ENCODE measurements at regions of chr1 and their contacts with region 1.

Region 1: DNA sequence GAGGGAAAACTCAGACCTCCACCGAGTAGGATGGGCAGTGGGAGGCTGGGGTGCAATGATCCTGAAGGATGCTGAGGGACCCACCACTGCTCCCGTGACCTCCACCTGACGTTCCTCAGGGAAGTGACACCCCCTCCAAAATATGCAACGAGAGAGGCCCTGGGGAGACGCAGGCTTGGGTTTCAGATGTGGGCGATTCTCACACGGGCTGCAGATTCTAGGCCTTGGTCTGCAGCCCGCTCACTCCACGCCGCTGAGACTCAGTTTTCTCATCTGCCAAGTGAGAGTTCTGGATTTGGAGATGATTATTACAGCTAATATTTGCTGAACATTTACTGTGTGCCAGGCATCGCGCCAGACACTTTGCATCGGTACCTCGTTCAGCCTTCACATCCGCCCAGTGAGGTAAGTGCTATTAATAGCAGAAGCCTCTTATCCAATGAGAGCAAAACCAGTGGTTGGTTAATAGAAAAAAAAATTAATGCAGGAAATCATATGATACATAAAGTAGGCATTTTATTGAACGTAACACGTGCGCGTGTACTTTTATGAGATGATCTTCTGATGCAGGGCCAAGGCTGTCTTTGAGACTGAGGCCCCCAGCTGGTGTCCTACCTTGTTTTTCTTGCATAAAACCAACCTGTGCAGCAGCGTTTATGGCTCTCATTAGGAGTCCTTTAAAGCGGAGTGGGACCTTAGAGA is 102.0 kb upstream of the RUNX3 start:
- DNase-seq: peak; percentile 94
- ATAC-seq: peak; percentile 44
- H3K4me3 ChIP-seq: peak overlapping the region; percentile 73
- H3K27ac ChIP-seq: peak overlapping the region; percentile 100
- H3K4me1 ChIP-seq: peaks cover 93% of the 10 kb centered on the region
- H3K27me3 ChIP-seq: no peaks in the 10 kb centered on the region
- CTCF ChIP-seq: peak in 1 of 3 experiments; percentile 30; a peak in 1 of 6 replicates
- EP300 ChIP-seq: peak in 1 of 2 experiments; percentile 17; a peak in 1 of 4 replicates
- POLR2A ChIP-seq: peak; percentile 66
- RAD21 ChIP-seq: peak; percentile 33; the same call in 1 of the 2 replicates

Region 2: DNA sequence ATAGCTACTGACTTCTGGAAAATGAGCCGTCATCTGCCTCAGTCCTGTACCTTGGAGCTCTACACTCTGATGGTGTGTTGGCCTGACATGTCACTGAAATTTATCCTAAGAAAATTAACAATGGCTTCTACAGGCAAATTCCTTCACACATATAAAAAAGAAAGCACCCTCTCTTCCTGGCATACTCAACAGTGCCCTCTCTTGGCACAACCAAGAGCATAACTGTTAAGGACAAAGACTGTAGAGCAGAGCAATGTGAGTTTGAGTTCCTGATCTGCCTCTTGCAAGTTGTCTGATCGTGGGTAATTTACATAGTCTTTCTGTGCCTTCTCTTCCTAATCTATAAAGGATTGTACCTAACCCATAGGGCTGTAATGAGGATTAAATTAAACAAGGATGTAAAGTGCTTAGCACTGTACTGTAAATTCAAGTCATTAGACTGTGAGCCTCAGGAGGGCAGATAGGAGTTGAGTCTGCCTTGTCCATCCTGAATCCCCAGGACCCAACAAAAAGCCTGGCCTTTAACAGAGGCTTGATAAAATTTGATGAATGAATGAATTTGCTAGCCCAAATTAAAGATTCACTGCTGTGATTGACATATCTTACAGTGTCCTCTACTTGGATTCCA is 116.7 kb after region 1 on chr1:
- CTCF ChIA-PET with region 1: interaction called, 18 read pairs
- POLR2A ChIA-PET with region 1: no interaction called
- RAD21 ChIA-PET with region 1: interaction called, 8 read pairs
- SMC1A ChIA-PET with region 1: interaction called, 9 read pairs
- in situ Hi-C with region 1: no loop called
- intact Hi-C with region 1: loop called (anchors 5 kb)
- DNase-seq: no peak
- ATAC-seq: peak; percentile 78
- H3K4me3 ChIP-seq: no peak overlapping the region
- H3K27ac ChIP-seq: no peak overlapping the region
- H3K4me1 ChIP-seq: peaks cover 12% of the 10 kb centered on the region
- H3K27me3 ChIP-seq: peaks cover 2 to 12% of the 10 kb centered on the region in 2 experiments
- CTCF ChIP-seq: peak; percentile 61 to 81 (median 67)
- EP300 ChIP-seq: no peak
- POLR2A ChIP-seq: no peak
- RAD21 ChIP-seq: peak; percentile 82